Dorsolateral prefrontal cortex (tissue), 120 donors: ENCODE measurements at regions of chr5 and their contacts with region 1.

Region 1: DNA sequence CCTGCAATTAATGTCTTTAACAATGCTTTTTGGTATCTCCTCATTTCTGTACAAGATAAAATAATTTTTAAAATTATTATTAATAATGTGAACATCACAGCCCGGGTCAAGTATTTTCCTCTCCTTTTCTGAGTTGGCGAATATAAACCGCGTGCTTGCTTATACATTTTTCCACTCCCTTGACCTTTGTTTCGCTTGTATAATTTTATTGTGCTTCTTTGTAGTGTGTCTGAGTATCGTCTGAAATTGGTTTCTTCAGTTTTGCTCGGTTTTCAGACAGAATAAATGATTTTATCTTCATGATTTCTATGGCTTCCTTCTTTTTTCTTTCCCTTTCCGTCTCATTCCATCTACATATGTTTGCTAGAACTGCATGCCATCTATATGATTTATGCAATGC is 448.5 kb downstream of the MAT2B start:
- DNase-seq: no peak
- H3K4me3 ChIP-seq: no peak overlapping the region
- H3K27ac ChIP-seq: no peak overlapping the region
- H3K27me3 ChIP-seq: no peaks in the 10 kb centered on the region
- CTCF ChIP-seq: no peak

Region 2: DNA sequence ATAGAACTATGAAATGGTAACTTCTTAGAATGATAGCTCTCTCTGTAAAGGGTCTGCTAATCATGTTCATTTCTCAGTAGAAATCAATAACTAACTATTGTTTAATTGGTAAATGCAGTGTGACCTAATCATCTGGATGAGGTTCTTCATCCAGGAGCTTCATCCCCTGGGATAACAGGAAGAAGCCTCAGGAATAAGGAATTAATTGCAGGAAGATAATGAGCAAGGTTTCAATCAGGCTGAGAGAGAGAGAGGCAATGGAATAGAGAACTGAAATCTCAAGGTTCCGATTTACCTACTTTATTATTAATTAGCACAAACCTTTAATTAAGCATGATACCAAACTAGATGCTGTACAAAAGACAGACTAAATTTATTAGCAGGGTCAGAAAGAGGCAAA is 51.2 kb after region 1 on chr5:
- intact Hi-C with region 1: loop called in 1 of 2 experiments (anchors 2 kb)
- DNase-seq: no peak
- H3K4me3 ChIP-seq: no peak overlapping the region
- H3K27ac ChIP-seq: no peak overlapping the region
- H3K27me3 ChIP-seq: peaks cover 0 to 3% (median 0%) of the 10 kb centered on the region in 45 donors
- CTCF ChIP-seq: no peak